ENCODE measurements at regions of chr3 and their contacts with region 1.

Region 1: DNA sequence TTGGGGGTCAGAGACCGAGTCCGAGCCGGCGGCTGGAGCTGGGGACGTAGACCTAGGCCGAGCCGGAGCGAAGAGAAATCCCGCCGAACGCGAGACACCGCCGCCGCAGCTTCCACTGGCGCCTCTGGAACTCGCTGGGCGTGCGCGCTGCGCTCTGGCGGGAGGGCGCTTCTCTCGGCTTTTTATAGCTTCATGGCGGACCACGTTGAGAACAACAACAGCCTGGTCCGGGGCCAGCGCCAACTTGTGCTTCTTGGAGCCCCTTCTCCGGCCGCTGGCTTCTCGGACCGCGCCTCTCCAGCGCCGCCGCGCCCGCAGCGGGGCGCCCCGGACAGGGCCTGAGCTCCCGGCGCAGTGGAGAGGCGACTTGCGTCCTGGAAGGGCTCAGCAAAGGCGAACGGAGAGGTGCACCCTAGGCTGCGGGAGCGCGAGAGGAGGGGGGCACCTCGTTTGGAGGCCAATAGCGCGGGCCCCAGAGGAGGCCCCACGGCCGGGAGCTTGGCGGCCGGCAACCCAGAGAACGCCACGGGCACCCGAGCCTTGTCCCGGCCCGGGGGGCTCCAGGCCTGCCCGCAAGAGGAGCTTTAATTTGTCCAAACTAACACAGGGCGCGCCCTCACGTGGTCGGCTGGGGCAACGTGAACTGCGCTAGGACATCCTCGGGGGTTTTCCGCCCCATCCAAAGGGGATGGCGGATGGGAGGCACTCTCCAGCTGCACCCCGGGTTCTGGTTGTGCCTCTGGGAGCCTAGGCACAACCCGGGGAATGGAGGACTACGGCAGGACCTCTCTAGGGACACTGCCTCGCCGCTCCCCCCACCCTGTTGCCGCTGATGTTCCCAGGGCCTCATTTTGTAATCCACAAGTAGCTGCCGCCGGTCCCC is 37.7 kb downstream of the HMCES start:
- DNase-seq: peak; percentile 83
- H3K4me3 ChIP-seq: peak overlapping the region; percentile 77 to 92
- H3K27ac ChIP-seq: peak overlapping the region; percentile 95 to 98
- H3K4me1 ChIP-seq: peaks cover 9% of the 10 kb centered on the region
- H3K27me3 ChIP-seq: no peaks in the 10 kb centered on the region
- CTCF ChIP-seq: peak; percentile 24 to 68 (median 46)
- POLR2A ChIP-seq: peak; percentile 96

Region 2: DNA sequence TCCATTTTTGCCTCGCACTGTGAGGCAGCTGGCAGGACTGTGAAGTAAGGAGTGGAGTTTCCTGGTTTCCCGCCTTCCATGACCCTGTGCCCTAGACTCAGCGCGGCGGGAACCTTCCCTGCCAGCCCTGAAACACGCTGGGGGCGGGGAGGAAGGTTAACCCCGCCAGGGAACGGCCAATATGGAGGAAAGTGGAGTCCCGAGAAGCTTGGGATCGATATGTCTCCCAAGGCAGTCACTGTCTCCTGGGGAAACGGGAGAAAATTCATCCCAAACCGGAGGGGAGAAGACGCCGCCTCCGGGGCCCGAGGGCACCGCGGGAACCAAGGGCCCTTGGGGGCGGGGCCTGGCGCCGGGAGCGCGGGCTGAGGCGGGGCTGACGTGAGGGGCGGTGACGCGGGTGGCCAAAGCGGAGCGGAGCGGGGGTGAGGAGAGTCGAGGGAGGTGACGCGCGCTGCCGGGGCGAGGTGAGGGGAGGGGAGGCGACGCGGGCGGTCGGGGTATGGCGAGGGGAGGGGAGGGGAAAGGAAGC is 37.9 kb before region 1 on chr3 and contains the start of gene HMCES:
- intact Hi-C with region 1: loop called (anchors 2 kb)
- DNase-seq: peak; percentile 92
- H3K4me3 ChIP-seq: peak within 1 kb of the TSS; percentile 90 to 95
- H3K27ac ChIP-seq: peak within 1 kb of the TSS; percentile 92 to 97
- H3K4me1 ChIP-seq: no peaks in the 10 kb centered on the region
- H3K27me3 ChIP-seq: no peaks in the 10 kb centered on the region
- CTCF ChIP-seq: peak in 2 of 4 experiments; percentile 28
- POLR2A ChIP-seq: peak; percentile 86
- total RNA-seq, gene HMCES: 29.1 to 34.9 TPM

Measured in prostate gland (tissue), 2 donors.